CD8-positive, alpha-beta memory T cell (primary cell): ENCODE measurements at regions of chr22 and their contacts with region 1.

Region 1: DNA sequence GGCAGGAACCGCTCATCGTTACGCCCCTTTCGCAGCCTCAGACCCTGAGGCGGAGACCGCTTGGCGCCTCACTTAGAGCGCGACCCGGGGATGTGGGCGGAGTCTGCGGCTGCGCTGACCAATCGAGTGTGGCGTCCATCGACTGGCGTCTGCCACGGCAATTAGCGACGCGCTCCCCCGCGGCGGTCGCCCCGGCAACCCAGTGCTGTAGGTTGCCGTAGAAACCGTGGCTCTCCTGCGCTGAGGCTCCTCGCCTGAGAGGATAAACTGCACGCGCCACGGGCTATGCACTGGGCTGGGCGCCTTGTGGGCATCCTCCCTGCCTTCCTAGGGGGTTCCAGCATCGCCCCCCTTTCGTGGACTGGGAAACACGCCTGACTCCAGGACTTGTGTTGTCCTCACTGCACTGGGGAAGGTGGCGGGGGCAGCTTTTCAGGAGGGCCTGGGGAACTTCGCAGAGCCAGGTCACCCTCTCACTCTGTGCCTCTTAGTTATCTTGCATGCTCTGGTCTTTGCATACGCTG is 701 bp upstream of the P2RX6 start:
- DNase-seq: peak; percentile 80 to 93 (median 82)
- H3K4me3 ChIP-seq: peak overlapping the region; percentile 74
- H3K4me3 Mint-ChIP-seq: peak overlapping the region; percentile 73 to 89 (median 85)
- H3K27ac ChIP-seq: peak overlapping the region; percentile 90
- H3K27ac Mint-ChIP-seq: peak overlapping the region; percentile 91 to 98 (median 96)
- H3K4me1 ChIP-seq: peaks cover 18% of the 10 kb centered on the region
- H3K4me1 Mint-ChIP-seq: peaks cover 26 to 34% (median 26%) of the 10 kb centered on the region in 3 donors
- H3K27me3 ChIP-seq: no peaks in the 10 kb centered on the region
- H3K27me3 Mint-ChIP-seq: peaks cover 0 to 2% of the 10 kb centered on the region in 2 donors

Region 2: DNA sequence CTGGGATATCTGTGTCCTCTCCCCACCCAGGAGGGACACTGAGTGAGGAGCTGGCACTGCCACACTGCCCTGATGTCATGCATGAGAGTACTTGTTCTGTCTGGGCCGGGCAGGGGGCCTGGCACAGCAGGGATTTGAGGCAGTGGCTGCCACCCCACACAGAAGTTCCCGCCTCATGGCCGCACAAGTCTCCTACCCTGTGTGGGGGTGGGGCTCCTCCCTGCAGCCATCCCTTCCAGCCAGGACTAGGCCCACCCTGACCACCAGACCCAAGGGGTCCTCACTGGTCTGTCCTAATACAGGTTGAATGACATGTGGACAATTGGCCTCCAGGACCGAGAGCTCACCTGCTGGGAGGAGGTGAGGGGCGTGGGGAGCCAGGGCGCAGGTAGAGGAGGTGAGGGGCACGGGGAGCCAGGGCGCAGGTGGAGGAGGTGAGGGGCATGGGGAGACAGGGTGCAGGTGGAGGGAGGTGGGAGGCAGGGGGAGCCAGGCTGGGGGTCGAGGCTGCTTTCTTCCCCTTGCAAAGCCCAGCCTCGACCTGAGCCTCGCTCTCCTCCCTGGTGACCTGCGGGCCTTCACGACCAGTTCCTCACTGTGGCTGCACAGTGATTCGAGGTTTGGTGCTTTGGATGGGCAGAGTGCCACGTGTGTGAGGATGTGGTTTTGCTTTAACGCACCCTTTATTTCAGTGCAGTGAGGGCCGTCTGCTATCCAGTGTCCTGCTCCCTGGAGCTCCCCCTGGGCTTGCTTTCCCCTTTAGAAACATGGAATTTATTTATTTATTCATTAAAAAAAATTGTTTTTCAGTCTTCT is 24.7 kb before region 1 on chr22:
- CTCF ChIA-PET with region 1: no interaction called
- POLR2A ChIA-PET with region 1: no interaction called
- DNase-seq: no peak
- H3K4me3 ChIP-seq: no peak overlapping the region
- H3K4me3 Mint-ChIP-seq: no peak overlapping the region
- H3K27ac ChIP-seq: no peak overlapping the region
- H3K27ac Mint-ChIP-seq: peak overlapping the region in 1 of 8 donors; percentile 51
- H3K4me1 ChIP-seq: no peaks in the 10 kb centered on the region
- H3K4me1 Mint-ChIP-seq: peaks cover 0 to 8% (median 6%) of the 10 kb centered on the region in 3 donors
- H3K27me3 ChIP-seq: no peaks in the 10 kb centered on the region
- H3K27me3 Mint-ChIP-seq: peaks cover 0 to 1% of the 10 kb centered on the region in 2 donors

Region 3: DNA sequence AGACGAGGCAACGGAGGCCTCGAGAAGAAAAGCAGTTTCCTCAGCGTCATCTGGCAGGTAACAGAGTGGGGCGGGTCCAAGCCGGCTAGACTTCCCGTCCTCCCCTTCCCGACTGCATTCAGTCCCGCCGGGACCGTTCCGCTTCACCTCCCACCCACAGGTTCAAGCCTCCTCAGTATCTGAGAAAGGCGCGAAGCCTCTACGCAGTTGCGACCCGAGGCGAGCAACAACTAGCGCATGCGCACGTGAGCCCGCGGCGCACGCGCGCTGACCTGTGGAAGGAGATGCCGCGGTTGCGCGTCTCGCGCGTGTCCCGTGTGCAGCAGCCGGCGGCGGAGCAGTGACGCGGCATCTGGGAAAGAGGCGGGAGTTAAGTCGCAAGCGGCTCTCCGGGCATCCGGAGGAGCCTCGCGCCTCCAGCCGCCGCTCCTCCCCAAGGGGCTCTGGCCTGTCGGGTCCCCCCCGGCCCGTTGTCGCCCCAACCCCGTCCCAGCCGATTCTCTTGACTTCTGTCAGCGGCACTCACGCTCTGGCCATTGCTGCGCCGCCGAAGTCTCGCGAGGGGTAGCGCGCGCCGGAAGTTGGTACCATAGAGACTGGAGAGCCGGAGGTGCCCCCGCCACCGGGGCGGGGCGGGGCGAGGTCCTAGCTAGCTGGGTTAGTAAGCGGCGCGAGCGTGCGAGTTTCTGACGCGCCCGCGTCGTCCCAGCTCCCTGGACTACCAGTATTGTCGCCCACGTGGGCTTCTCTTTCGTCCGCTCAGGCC is 12.5 kb before region 1 on chr22 and contains the start of gene THAP7:
- CTCF ChIA-PET with region 1: interaction called, 4 read pairs
- POLR2A ChIA-PET with region 1: interaction called, 12 read pairs
- DNase-seq: peak; percentile 95 to 98 (median 97)
- H3K4me3 ChIP-seq: peak within 1 kb of the TSS; percentile 65
- H3K4me3 Mint-ChIP-seq: peak within 1 kb of the TSS; percentile 85 to 97 (median 95)
- H3K27ac ChIP-seq: peak within 1 kb of the TSS; percentile 99
- H3K27ac Mint-ChIP-seq: peak within 1 kb of the TSS; percentile 97 to 100 (median 99)
- H3K4me1 ChIP-seq: peaks cover 32% of the 10 kb centered on the region
- H3K4me1 Mint-ChIP-seq: peaks cover 22 to 55% (median 23%) of the 10 kb centered on the region in 3 donors
- H3K27me3 ChIP-seq: no peaks in the 10 kb centered on the region
- H3K27me3 Mint-ChIP-seq: peaks cover 0 to 3% of the 10 kb centered on the region in 2 donors
- total RNA-seq, gene THAP7: 43.9 TPM

Region 4: DNA sequence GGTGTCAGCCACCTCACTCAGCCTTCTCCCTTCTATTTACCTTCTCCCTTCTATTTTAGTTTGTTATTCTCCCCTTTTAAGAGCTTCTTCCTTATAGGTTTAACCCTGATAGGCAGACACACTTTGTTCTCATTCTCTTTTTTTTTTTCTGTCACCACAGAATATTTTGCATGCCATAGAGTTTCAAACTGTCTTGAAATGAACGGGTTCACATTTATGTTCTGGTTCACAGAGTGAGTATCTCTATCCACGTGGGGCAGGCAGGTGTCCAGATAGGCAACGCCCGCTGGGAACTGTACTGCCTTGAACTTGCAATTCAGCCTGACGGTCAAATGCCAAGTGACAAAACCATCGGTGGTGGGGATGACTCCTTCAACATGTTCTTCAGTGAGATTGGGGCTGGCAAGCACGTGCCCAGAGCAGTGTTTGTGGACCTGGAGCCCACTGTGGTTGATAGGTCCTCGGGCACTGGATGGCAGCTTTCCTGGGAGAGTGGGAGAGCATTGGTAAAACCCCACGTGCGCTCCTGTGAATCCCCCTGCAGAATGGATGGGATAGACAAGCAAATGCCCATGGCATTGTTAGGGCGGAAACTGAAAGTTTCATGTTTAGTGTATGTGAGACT is 51.1 kb after region 1 on chr22:
- CTCF ChIA-PET with region 1: no interaction called
- POLR2A ChIA-PET with region 1: no interaction called
- DNase-seq: no peak
- H3K4me3 ChIP-seq: no peak overlapping the region
- H3K4me3 Mint-ChIP-seq: no peak overlapping the region
- H3K27ac ChIP-seq: no peak overlapping the region
- H3K27ac Mint-ChIP-seq: no peak overlapping the region
- H3K4me1 ChIP-seq: no peaks in the 10 kb centered on the region
- H3K4me1 Mint-ChIP-seq: peaks cover 0 to 6% (median 0%) of the 10 kb centered on the region in 3 donors
- H3K27me3 ChIP-seq: peaks cover 3% of the 10 kb centered on the region
- H3K27me3 Mint-ChIP-seq: peaks cover 5 to 7% of the 10 kb centered on the region in 2 donors